Sciatic nerve (tissue), 2 donors: ENCODE measurements at regions of chr1 and their contacts with region 1.

Region 1: GRCh38 chr1:200802865-200803512 is 64.3 kb downstream of the CAMSAP2 start:
- DNase-seq: peak; percentile 85
- ATAC-seq: peak; percentile 91

Region 2: DNA sequence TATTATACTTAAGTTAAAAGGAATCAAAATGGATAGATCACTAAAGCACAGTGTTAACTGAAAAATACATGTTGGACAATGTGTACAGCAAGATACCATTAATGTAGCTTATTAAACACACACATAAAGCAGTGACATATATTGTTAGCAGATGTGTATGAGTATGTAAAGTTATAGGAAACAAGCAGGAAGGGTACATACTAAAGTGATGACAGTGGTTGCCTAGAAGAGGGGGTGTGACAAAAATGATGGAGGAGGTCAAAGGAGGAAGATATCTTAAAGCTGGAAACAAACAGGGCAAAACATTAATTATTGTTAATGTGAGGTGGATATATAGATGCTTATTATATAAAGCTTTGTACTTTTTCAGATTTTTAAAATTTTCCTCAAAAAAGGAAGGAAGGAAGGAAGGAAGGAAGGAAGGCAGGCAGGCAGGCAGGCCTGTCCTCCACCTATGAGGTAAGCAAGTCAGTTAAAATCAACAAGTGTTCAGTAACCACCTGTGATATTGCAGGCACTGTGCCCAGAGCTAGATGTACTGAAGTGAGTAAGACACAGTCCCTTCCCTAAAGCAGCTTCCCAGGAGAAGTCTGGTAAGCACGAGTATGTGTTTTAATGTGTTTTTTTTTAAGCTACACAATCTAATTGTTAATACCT is 1028.4 kb before region 1 on chr1:
- intact Hi-C with region 1: no loop called
- DNase-seq: no peak
- ATAC-seq: no peak

Region 3: DNA sequence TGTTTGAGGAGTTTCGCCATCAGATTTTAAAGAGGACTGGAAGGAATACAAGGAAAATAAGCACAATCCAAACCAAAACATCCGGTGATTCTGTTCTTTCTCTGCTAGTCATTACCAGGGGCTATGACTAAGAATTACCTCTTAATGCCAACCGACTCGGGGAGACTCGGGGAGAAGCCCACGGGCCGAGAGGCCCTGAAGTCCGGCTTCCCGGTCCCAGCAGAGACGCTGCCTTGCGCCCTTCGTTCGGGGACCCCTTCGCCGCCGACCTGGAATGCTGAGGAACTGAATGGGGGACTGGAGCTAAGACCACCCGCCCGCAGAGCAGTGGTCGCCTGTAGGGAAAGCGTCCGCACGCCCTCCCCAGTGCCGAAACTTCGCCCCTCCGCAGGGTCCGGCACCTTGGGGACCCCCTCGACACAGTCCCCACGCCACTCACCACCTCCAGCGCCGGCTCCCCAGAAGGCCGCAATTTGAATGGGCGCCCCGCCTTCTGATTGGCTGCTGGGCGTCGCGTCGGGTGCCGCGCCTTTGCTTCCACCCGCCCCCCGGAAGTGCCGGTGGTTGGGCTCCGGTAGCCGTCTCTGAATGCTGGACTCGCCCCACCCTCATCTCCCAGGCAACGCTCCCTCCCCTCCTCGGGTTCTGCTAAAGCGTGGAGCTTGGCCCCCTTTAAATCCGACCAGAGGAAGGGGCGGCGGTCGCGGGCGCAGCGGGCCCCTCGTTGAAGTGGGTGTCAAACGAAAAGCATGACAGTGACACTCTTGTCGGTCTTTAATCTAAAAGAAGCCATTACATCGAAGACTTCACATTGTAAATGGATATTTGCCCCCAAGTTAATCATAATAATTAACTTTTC is 182.5 kb before region 1 on chr1 and contains the start of gene KIF14:
- intact Hi-C with region 1: loop called (anchors 10 kb)
- DNase-seq: peak; percentile 94
- ATAC-seq: peak; percentile 99
- total RNA-seq, gene KIF14: 0.22 TPM

Region 4: DNA sequence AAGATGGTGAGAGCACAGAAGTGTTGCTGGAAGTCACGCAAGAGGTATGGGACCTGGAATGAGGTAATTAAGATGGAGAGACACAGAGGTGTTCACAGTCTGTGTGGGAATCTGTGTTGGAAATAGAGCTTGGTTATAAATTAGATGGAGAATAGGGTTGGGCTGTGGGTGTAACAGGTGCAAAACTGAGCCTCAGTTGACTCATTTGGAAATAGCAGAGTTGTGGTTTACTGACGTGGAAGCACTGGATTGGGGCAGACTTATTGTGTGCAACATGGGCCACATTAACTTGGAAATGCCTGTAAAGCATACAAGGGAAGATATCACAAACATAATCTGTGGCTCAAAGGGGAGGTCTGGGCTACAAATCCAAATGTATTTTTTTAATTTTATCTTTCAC is 51.3 kb before region 1 on chr1:
- intact Hi-C with region 1: no loop called
- DNase-seq: no peak
- ATAC-seq: no peak

Region 5: DNA sequence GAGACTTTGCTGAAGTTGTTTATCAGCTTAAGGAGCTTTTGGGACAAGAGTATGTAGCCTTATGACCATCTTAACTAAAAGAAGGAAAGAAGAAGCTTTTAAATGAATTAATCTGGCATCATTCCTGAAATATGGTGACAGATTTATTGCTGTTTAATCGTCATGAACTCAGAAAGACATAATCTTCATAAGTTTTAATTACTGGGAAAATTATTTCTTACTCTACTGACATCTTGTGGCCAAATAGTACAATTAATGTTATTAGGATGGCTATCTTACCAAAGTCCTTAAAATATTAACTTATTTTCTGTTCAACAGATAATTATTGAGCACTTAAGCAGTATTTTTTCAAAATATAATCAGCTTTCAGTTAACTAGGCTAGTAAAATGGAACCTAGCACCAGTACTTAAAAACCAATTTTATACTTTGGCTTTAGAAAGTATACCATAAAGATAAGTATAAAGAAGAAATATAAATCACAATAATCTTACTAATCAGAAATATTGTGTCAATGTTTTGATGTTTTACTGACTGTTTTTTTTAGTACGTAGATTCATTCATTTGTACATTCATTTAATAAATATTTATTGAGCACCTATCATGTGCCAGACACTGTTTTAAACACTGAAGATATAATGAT is 35.1 kb after region 1 on chr1:
- intact Hi-C with region 1: no loop called
- DNase-seq: no peak
- ATAC-seq: no peak

Region 6: DNA sequence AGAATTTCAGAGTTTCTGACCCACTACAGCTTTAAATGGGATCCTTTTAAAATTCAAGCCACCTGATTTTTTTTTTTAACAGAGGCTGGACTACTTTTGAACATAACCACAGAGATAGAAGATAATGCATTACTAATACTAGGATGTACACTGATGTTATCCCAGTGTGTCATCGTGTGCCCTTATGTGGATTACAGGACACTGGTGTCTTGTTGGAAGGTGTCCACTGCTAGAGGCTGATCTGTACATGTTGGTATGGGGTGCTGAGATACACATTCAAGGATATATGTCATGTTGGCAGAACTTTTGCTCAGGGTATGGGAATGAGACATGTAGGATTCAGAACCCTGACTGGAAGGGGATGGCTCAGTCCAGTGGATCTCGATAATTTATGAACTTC is 148.0 kb after region 1 on chr1:
- intact Hi-C with region 1: no loop called
- DNase-seq: no peak
- ATAC-seq: no peak